Dendritic cell treated with granulocyte-macrophage colony-stimulating factor and Interleukin-4, amounts not matched to agents 40 ng/mL and 50 ng/mL, for 4 days (primary cell): ENCODE measurements at regions of chr13 and their contacts with region 1.

Region 1: DNA sequence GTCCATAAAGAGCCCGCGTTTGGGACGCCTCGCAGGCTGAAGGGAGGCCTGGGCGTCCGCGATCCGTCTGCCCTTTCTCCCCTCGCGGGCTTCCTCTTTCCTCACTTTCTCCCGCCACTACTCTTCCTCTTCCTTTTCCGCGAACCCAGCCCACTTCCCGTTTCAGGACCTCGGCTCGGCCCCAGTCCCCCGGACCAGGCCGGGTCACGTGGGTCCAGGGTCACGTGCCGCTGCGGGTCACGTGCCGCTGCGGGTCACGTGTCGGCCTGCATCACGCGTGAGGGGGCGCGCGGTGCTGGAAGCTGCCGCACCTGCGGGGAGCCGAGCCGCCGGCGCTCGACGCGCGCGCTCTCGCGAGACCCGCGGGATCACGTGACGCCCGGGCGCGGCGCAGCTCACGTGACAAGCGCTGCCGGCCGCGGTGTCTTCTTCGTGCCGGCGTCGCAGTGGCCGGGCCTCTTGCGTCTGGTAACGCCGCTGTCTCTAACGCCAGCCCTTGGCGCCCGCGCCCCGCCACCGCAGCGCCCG is at the start of gene LAMP1:
- H3K4me3 Mint-ChIP-seq: peak within 1 kb of the TSS; percentile 88
- H3K27ac Mint-ChIP-seq: peak within 1 kb of the TSS; percentile 74
- H3K4me1 Mint-ChIP-seq: peaks cover 55% of the 10 kb centered on the region
- H3K27me3 Mint-ChIP-seq: peaks cover 49% of the 10 kb centered on the region

Region 2: GRCh38 chr13:113258321-113259054 is 38.4 kb before region 1 on chr13:
- intact Hi-C with region 1: loop called (anchors 5 kb)
- H3K4me3 Mint-ChIP-seq: no peak overlapping the region
- H3K27ac Mint-ChIP-seq: no peak overlapping the region
- H3K4me1 Mint-ChIP-seq: peaks cover 12% of the 10 kb centered on the region
- H3K27me3 Mint-ChIP-seq: no peaks in the 10 kb centered on the region

Region 3: DNA sequence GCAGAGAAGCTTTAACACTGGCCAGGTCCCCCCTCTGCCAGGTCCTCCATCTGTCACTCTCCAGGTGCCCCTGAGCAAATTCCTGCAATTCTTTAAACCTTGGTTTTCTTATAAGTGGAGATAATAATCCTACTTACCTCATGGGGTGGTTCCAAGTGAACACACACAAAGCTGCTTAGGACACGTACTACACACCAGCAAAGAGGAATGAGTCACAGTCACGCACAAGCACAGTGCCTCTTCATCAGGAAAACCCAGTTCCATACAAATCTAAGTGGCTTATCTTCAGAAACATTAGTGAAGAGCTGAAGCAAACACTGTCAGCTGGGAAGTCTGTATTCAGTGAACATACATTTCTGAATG is 22.7 kb before region 1 on chr13:
- intact Hi-C with region 1: loop called (anchors 2 kb)
- H3K4me3 Mint-ChIP-seq: no peak overlapping the region
- H3K27ac Mint-ChIP-seq: peak overlapping the region; percentile 67
- H3K4me1 Mint-ChIP-seq: peaks cover 50% of the 10 kb centered on the region
- H3K27me3 Mint-ChIP-seq: peaks cover 43% of the 10 kb centered on the region

Region 4: DNA sequence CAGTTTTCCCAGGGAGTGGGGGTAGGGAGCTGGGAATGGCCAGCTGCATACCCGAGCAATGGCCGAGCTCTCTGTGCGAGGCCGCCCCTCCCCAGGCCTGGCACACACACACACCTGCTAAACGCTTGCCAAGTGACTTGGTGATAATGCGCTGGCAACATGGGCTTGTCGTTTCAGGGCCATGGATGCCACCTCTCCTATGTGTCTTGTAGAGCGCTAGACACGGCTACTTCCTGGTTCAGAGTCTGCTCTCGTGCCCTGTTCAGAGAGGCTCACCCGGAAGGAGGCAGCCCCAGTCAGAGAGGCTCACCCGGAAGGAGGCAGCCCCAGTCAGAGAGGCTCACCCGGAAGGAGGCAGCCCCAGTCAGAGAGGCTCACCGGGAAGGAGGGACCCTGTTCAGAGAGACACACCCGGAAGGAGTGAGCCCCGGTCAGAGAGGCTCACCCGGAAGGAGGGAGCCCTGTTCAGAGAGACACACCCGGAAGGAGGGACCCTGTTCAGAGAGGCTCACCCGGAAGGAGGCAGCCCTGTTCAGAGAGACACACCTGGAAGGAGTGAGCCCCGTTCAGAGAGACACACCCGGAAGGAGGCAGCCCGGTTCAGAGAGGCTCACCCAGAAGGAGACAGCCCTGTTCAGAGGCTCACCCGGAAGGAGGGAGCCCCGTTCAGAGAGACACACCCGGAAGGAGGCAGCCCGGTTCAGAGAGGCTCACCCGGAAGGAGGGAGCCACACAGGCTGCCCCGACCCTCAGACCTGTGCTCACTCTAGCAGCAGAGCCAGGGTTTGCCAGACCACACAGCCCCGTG is 152.2 kb after region 1 on chr13:
- intact Hi-C with region 1: no loop called
- H3K4me3 Mint-ChIP-seq: no peak overlapping the region
- H3K27ac Mint-ChIP-seq: no peak overlapping the region
- H3K4me1 Mint-ChIP-seq: no peaks in the 10 kb centered on the region
- H3K27me3 Mint-ChIP-seq: no peaks in the 10 kb centered on the region